Thyroid gland (tissue), 4 donors: ENCODE measurements at regions of chr22 and their contacts with region 1.

Region 1: DNA sequence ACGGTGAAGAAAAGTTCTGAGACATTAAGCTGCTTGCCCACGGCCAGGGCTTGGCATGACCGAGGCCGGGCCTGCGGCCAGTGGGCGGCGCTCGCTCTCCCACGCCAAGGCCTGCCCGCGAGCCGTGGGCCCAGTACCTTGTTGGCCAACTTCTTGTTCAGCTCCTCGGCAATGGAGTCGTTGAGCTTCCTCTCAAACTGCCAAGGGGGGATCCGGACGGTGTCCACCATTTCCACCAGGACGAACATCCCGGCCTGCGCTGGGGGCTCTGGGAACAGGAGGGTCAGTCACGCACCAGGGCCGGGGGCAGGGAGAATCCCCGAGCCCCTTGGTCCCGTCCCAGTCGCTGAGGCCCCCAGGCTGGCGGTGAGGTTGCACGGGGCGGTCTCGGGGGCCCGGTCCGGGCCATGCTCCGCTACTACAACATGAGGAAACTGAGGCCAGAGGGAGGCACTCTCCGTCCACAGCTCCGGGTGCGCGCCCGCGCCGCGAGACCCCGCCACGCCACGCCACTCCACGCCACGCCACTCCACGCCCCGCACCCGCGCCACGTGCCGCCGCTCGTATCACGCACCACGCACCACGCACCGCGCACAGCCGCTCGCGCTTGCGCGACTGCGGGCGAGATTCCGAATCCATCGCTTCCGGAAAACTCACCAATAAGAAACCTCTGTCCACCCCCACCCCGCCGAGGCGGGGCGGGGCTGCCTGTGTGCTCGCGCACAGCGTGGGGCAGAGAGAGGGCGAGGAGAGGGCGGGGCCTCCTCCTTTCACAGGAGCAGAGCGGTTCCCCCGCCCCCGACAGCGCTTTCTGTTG is at the start of gene POLR3H:
- DNase-seq: peak; percentile 99
- H3K4me3 ChIP-seq: peak within 1 kb of the TSS; percentile 49 to 85 (median 77)
- H3K27ac ChIP-seq: peak within 1 kb of the TSS; percentile 72 to 89 (median 76)
- H3K4me1 ChIP-seq: peaks cover 16 to 26% of the 10 kb centered on the region in 2 donors
- H3K27me3 ChIP-seq: no peaks in the 10 kb centered on the region
- CTCF ChIP-seq: peak in 5 of 6 experiments; percentile 28 to 67 (median 48)
- POLR2A ChIP-seq: peak in 1 of 2 donors; percentile 58
- total RNA-seq, gene POLR3H: 20.6 to 27.3 (median 25.3) TPM

Region 2: GRCh38 chr22:41501209-41501608 is 42.9 kb before region 1 on chr22:
- intact Hi-C with region 1: no loop called
- DNase-seq: no peak
- H3K4me3 ChIP-seq: no peak overlapping the region
- H3K27ac ChIP-seq: no peak overlapping the region
- H3K4me1 ChIP-seq: peaks cover 0 to 9% of the 10 kb centered on the region in 2 donors
- H3K27me3 ChIP-seq: no peaks in the 10 kb centered on the region
- CTCF ChIP-seq: no peak
- POLR2A ChIP-seq: no peak

Region 3: GRCh38 chr22:41596776-41597634 is 52.9 kb after region 1 on chr22:
- intact Hi-C with region 1: loop called (anchors 5 kb)
- DNase-seq: peak; percentile 89 to 92
- H3K4me3 ChIP-seq: no peak overlapping the region
- H3K27ac ChIP-seq: peak overlapping the region; percentile 44 to 56 (median 50)
- H3K4me1 ChIP-seq: peaks cover 0 to 5% of the 10 kb centered on the region in 2 donors
- H3K27me3 ChIP-seq: no peaks in the 10 kb centered on the region
- CTCF ChIP-seq: peak; percentile 58 to 90 (median 84)
- POLR2A ChIP-seq: no peak

Region 4: GRCh38 chr22:41608386-41608785 is 64.3 kb after region 1 on chr22:
- intact Hi-C with region 1: no loop called
- DNase-seq: no peak
- H3K4me3 ChIP-seq: no peak overlapping the region
- H3K27ac ChIP-seq: no peak overlapping the region
- H3K4me1 ChIP-seq: no peaks in the 10 kb centered on the region
- H3K27me3 ChIP-seq: no peaks in the 10 kb centered on the region
- CTCF ChIP-seq: no peak
- POLR2A ChIP-seq: no peak